Activated CD4-positive, alpha-beta T cell treated with anti-CD3 and anti-CD28 coated beads for 36 hours (primary cell): ENCODE measurements at regions of chr7 and their contacts with region 1.

Region 1: DNA sequence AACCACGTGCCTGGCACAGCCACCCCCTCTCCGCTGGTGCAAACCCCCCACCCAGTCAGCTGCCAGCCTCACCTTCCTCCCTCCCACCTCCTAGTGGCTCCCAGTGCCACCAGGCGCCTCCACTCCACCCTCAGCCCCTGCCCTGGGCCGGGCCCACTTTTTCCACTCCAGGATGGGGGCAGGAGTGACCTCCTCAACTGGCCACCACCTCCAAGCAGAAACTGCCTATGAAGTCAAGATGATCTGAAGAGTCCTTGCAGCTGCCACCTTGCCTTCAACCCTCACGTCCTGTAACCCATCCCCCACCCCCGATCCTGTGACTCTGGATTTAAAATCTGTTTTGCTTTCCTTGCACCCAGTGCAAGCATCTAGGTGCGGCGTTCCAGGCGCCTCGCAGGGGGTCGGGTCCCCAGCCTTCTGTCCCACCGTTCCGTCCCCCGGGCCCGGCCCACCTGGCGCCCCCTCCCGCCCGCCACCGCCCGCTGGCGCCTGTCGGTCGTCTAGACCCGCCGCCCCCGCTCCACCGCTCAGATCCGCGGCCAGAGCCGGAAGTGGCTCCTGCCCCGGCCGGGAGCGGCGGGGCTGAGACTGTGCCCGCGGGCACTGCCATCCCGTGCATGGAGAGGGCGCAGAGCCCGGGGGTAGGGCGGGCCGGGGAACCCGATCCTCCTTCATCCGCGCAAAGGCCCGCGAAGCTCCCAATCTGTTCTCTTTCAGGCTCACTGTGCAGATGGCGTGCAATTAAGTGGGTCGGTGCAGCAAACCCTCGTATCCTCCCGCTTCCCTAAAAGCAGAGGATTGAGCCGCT is 51.2 kb upstream of the GTF2I start:
- DNase-seq: peak; percentile 72
- ATAC-seq: peak; percentile 89
- H3K4me3 Mint-ChIP-seq: peak overlapping the region; percentile 62
- H3K27ac Mint-ChIP-seq: peak overlapping the region; percentile 51
- H3K4me1 Mint-ChIP-seq: peaks cover 8% of the 10 kb centered on the region
- H3K27me3 Mint-ChIP-seq: no peaks in the 10 kb centered on the region

Region 2: DNA sequence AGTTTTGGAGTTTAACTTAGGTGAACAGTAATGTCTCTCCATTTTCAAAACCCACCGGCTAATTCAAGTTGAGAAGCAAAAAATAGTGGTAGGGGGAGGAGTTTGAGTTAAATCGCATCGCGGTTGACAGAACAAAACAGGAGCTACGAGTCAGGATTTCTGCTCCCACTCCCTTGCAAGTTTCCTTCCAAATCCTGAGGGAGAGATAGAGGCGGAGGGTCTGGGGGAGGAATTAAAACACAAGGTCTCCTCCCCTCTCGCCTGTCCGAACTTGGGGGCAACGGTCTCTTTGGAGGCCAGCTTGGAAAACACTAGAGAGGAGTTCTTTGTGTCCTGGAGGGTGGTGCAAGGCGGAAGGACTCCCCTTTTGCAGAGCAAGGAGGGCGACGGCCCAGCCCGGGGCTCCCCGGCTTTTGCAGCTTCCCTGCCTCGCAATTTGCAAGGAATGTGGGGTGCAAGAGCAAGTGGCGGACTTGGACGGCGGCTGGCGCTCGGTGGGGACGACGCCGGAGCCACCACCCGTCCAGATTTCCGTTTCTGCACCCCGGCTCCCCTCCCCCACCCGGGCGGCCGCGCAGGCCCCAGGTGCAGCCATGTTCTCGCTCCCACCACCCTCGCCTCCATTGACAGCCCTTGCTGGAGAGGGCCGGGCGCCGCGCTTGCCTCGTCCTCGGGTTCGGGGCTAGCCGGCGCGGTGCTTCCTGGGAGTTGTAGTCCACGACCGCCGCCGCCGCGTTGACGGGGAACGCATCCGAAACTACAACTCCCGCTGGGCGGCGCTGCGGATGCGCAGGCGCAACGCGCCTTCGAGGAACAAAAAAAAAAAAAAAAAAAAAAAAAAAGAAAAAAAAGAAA is 50.8 kb after region 1 on chr7:
- CTCF ChIA-PET with region 1: no interaction called
- POLR2A ChIA-PET with region 1: no interaction called
- intact Hi-C with region 1: loop called in 1 of 2 experiments (anchors 5 kb)
- DNase-seq: peak; percentile 100
- ATAC-seq: peak; percentile 82
- H3K4me3 Mint-ChIP-seq: peak overlapping the region; percentile 76
- H3K27ac Mint-ChIP-seq: peak overlapping the region; percentile 92
- H3K4me1 Mint-ChIP-seq: peaks cover 52% of the 10 kb centered on the region
- H3K27me3 Mint-ChIP-seq: no peaks in the 10 kb centered on the region